GM12878 (cell line): ENCODE measurements at regions of chr10 and their contacts with region 1.

Region 1: GRCh38 chr10:113922787-113923570 is 68.5 kb downstream of the NHLRC2 start:
- DNase-seq: no peak
- ATAC-seq: peak; percentile 51
- H3K4me3 ChIP-seq: no peak overlapping the region
- H3K27ac ChIP-seq: no peak overlapping the region
- H3K4me1 ChIP-seq: no peaks in the 10 kb centered on the region
- H3K27me3 ChIP-seq: no peaks in the 10 kb centered on the region
- CTCF ChIP-seq: no peak; a peak in 1 of 6 replicates
- EP300 ChIP-seq: no peak
- POLR2A ChIP-seq: no peak
- RAD21 ChIP-seq: peak; percentile 22; the same call in 1 of the 2 replicates

Region 2: DNA sequence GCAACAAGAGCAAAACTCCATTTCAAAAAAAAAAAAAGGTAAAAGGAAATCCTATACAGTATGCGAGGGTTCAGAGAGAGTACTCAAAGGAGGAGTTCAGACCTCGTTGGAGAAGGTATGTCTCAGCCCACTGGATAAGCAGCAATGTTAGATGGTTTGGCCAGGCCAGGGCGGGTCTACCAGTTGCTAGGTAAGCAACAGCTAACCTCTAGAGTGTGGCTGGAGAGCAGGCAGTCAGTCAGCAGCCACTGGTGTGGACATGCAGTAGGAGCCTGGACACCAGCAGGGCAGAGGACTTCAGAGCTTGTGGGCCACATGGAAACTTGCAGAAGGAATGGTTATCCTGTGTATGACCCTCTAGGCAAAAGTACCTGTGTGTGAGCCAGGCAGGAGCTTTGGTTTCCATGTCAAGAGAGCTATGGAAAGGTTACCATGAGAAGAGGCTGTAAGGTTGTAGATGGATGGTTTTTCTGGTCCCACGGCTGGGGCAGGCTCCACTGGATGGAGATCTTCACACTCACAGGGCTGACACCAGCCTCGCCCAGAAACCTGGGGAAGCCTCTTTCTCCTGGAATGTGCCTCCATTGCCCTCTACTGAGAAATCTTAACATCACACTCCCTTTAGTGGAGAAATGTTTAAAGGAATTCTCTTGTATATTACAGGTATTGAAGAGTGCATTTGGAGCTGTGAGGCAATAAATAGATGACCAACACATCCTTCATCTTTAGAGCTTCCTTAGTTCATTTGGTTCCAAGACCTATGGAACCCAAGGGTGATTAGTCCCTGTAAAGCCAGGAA is 187.4 kb after region 1 on chr10:
- CTCF ChIA-PET with region 1: interaction called, 3 read pairs
- POLR2A ChIA-PET with region 1: no interaction called
- RAD21 ChIA-PET with region 1: no interaction called
- SMC1A ChIA-PET with region 1: no interaction called
- in situ Hi-C with region 1: no loop called
- intact Hi-C with region 1: loop called (anchors 5 kb)
- DNase-seq: no peak
- ATAC-seq: peak; percentile 53
- H3K4me3 ChIP-seq: no peak overlapping the region
- H3K27ac ChIP-seq: no peak overlapping the region
- H3K4me1 ChIP-seq: no peaks in the 10 kb centered on the region
- H3K27me3 ChIP-seq: peaks cover 0 to 4% of the 10 kb centered on the region in 2 experiments; a peak in 1 of 4 replicates
- CTCF ChIP-seq: peak in 2 of 3 experiments; percentile 24 to 31; a peak in 2 of 6 replicates
- EP300 ChIP-seq: no peak
- POLR2A ChIP-seq: no peak
- RAD21 ChIP-seq: peak; percentile 60